Activated CD4-positive, alpha-beta T cell treated with anti-CD3 and anti-CD28 coated beads for 36 hours (primary cell): ENCODE measurements at regions of chr5 and their contacts with region 1.

Region 1: DNA sequence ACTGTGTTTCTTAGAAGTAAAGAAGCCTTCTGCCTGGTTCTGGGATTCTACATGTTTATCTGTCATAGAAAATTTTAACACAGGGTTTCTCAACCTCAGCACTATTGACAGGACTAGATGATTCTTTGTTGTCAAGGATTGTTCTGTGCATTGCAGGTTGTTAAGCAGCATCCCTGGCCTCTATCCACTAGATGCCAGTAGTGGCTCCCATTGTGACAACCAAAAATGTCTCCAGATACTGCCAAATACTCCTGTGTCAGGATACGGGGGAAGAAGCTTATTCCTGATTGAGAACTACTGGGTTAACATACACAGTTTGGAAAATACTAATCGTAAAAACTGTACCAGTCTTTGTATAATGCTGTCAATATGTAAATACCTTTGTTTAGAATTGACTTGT is 167.1 kb downstream of the NIPBL start:
- DNase-seq: no peak
- ATAC-seq: peak; percentile 39
- H3K4me3 Mint-ChIP-seq: no peak overlapping the region
- H3K27ac Mint-ChIP-seq: no peak overlapping the region
- H3K4me1 Mint-ChIP-seq: no peaks in the 10 kb centered on the region
- H3K27me3 Mint-ChIP-seq: no peaks in the 10 kb centered on the region

Region 2: DNA sequence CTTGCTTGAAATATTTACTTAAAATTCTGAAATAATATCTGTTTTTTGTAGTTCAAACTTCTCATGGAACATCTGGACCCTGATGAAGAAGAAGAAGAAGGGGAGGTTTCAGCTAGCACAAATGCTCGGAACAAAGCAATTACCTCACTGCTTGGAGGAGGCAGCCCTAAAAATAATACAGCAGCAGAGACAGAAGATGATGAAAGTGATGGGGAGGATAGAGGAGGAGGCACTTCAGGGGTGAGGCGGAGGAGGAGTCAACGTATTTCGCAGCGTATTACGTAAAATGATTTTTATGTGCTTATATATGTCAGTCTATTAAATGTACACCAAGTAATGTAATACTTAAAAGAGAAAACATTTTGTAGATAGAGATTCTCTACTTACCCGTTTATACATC is 20.1 kb after region 1 on chr5:
- CTCF ChIA-PET with region 1: no interaction called
- POLR2A ChIA-PET with region 1: no interaction called
- intact Hi-C with region 1: no loop called
- DNase-seq: no peak
- ATAC-seq: no peak
- H3K4me3 Mint-ChIP-seq: no peak overlapping the region
- H3K27ac Mint-ChIP-seq: no peak overlapping the region
- H3K4me1 Mint-ChIP-seq: no peaks in the 10 kb centered on the region
- H3K27me3 Mint-ChIP-seq: no peaks in the 10 kb centered on the region

Region 3: DNA sequence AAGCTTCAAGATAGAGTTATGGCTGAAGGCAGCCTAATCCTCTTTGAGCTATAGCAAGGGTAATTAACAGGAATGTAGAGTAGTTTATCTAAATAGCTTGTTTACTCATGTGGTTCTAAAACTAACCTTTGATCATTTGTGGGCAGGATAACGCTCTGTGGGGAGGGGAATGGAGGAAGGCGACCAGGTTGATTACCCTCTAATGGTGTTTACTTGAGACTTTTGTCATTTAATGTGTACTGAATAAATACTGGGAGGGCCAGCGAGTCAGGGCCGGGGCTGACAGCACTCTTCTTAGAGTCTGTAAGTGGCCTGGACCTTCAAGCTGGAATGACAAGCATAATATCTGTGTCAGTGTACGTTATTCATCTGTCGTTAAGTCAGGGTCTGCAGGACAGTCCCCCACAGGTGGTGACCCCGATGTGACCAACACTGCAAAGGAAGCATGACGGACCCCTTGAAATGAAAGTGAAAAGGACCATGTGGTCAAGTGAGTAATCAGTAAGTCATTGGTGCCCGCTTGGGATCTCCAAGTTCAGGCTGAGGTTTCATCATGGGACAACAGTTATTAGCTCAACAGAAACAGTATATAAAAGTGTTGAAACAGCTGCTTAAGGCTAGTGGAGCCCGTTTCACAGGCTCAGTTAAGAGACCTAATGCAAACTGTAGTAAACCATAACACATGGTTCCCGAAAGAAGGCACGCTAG is 42.9 kb after region 1 on chr5:
- CTCF ChIA-PET with region 1: no interaction called
- POLR2A ChIA-PET with region 1: no interaction called
- intact Hi-C with region 1: no loop called
- DNase-seq: no peak
- ATAC-seq: no peak
- H3K4me3 Mint-ChIP-seq: no peak overlapping the region
- H3K27ac Mint-ChIP-seq: no peak overlapping the region
- H3K4me1 Mint-ChIP-seq: no peaks in the 10 kb centered on the region
- H3K27me3 Mint-ChIP-seq: no peaks in the 10 kb centered on the region

Region 4: GRCh38 chr5:37214550-37214949 is 170.9 kb after region 1 on chr5:
- CTCF ChIA-PET with region 1: interaction called, 3 read pairs
- POLR2A ChIA-PET with region 1: no interaction called
- intact Hi-C with region 1: loop called in 1 of 2 experiments (anchors 10 kb)
- DNase-seq: no peak
- ATAC-seq: peak; percentile 47
- H3K4me3 Mint-ChIP-seq: no peak overlapping the region
- H3K27ac Mint-ChIP-seq: no peak overlapping the region
- H3K4me1 Mint-ChIP-seq: peaks cover 4% of the 10 kb centered on the region
- H3K27me3 Mint-ChIP-seq: no peaks in the 10 kb centered on the region

Region 5: DNA sequence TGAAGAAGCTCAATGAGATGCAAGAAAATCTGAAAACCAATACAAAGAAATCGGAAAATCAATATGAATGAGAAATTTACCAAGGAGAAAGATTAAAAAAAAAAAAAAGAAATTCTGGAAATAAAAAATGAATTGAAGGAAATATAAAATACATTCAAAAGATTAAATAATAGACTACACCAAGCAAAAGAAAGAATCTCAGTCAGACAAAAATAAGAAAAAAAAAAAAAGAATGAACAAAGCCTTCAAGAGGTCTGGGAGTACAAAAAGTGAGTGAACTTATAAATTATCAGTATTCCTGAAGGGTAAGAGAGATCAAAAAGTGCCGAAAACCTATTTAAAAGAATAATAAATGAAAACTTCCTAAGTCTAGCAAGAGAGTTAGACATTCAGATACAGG is 190.6 kb after region 1 on chr5:
- CTCF ChIA-PET with region 1: no interaction called
- POLR2A ChIA-PET with region 1: no interaction called
- intact Hi-C with region 1: no loop called
- DNase-seq: no peak
- ATAC-seq: no peak
- H3K4me3 Mint-ChIP-seq: no peak overlapping the region
- H3K27ac Mint-ChIP-seq: no peak overlapping the region
- H3K4me1 Mint-ChIP-seq: no peaks in the 10 kb centered on the region
- H3K27me3 Mint-ChIP-seq: no peaks in the 10 kb centered on the region

Region 6: DNA sequence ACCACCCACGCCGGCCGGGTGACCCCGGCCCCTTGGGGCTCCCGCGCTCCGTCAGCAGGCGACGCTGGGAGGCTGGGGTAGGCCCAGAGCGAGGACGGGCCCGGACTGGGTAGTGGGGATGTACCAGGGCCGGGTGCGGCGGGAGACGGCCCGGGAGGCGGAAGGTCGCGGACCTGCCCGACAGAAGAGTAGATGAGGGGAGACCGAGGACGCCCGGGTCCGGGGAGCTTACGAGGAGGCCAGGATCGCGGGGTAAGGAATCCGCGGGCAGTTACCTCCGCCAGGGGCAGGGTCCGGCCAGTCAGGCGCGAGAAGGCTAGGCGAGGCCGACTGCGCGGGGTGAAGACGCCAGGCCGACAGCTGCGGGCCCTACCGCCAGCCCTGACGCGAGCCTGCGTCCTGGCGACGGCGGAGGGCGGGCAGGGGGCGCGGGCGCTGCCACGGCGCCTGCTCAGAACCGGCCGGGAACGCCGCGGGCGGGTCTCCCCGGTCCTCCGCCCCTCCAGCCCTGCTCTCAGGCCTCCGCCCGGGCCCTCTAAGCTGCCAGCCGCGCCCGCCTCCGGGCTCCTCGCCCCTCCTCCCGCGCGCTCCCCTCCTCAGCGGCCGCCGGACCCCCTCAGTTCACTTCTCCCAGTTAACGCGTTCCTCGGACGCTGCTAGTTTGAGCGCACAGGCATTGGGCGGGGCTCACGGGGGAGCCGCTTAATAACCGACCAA is 205.4 kb after region 1 on chr5 and contains the start of gene CPLANE1:
- CTCF ChIA-PET with region 1: no interaction called
- POLR2A ChIA-PET with region 1: no interaction called
- intact Hi-C with region 1: no loop called
- DNase-seq: peak; percentile 72
- ATAC-seq: peak; percentile 91
- H3K4me3 Mint-ChIP-seq: peak within 1 kb of the TSS; percentile 75
- H3K27ac Mint-ChIP-seq: peak within 1 kb of the TSS; percentile 72
- H3K4me1 Mint-ChIP-seq: peaks cover 6% of the 10 kb centered on the region
- H3K27me3 Mint-ChIP-seq: no peaks in the 10 kb centered on the region
- total RNA-seq, gene CPLANE1: 6.2 to 7.4 TPM

Region 7: DNA sequence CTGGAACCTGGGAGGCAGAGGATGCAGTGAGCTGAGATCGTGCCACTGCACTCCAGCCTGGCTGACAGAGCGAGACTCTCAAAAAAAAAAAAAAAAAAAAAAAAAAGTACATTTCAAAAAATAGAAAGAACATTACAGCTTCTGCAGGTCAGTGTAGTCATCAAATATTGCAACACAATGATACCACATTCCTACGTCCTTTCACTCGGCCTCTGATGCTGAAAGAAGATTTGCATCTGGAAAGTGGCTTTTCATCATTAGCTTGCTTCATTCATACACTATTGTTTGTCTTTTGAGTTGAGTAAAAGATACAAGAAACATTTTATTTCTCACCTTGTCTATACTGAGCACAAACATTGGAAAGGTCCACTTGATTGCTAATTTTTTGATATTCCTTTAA is 265.1 kb after region 1 on chr5:
- CTCF ChIA-PET with region 1: no interaction called
- POLR2A ChIA-PET with region 1: no interaction called
- intact Hi-C with region 1: loop called in 1 of 2 experiments (anchors 10 kb)
- DNase-seq: no peak
- ATAC-seq: no peak
- H3K4me3 Mint-ChIP-seq: no peak overlapping the region
- H3K27ac Mint-ChIP-seq: no peak overlapping the region
- H3K4me1 Mint-ChIP-seq: no peaks in the 10 kb centered on the region
- H3K27me3 Mint-ChIP-seq: no peaks in the 10 kb centered on the region